ENCODE measurements at regions of chr9 and their contacts with region 1.

Region 1: GRCh38 chr9:91676046-91676445 is 252.4 kb upstream of the NFIL3 start:
- DNase-seq: no peak
- ATAC-seq: peak in 2 of 8 donors; percentile 35 to 52
- H3K4me3 ChIP-seq: no peak overlapping the region
- H3K27ac ChIP-seq: no peak overlapping the region
- H3K4me1 ChIP-seq: no peaks in the 10 kb centered on the region
- H3K27me3 ChIP-seq: peaks cover 0 to 5% (median under 1%) of the 10 kb centered on the region in 7 donors
- CTCF ChIP-seq: peak in 5 of 9 donors; percentile 17 to 44 (median 36)

Region 2: GRCh38 chr9:90393365-90394150 is 1282.5 kb before region 1 on chr9:
- intact Hi-C with region 1: loop called in 1 of 10 experiments (anchors 10 kb)
- DNase-seq: no peak
- ATAC-seq: no peak
- H3K4me3 ChIP-seq: no peak overlapping the region
- H3K27ac ChIP-seq: no peak overlapping the region
- H3K4me1 ChIP-seq: no peaks in the 10 kb centered on the region
- H3K27me3 ChIP-seq: peaks cover 0 to 5% (median 0%) of the 10 kb centered on the region in 7 donors
- CTCF ChIP-seq: no peak

Region 3: DNA sequence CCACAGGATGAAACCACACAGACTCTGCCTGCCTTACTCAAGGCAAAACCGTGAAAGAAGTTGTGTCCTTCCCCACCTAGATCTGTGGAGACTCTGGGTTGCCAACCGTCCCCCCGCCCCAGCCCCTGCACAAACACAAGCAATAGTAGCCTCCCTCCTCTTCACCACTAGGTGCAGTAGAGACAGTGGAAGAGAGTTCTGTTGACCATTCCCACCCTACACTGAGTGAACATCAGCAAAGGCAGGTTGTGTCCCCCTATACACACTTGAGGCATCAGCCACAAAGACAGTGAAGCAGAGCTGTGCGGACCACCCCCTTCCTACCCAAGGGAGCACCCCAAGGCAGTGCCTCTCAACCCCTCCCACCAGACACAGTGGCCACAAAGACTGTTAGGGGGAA is 28.7 kb before region 1 on chr9:
- intact Hi-C with region 1: no loop called
- DNase-seq: no peak
- ATAC-seq: no peak
- H3K4me3 ChIP-seq: no peak overlapping the region
- H3K27ac ChIP-seq: no peak overlapping the region
- H3K4me1 ChIP-seq: peaks cover 0 to 3% (median 0%) of the 10 kb centered on the region in 9 donors
- H3K27me3 ChIP-seq: peaks cover 0 to 7% (median 0%) of the 10 kb centered on the region in 7 donors
- CTCF ChIP-seq: no peak

Region 4: DNA sequence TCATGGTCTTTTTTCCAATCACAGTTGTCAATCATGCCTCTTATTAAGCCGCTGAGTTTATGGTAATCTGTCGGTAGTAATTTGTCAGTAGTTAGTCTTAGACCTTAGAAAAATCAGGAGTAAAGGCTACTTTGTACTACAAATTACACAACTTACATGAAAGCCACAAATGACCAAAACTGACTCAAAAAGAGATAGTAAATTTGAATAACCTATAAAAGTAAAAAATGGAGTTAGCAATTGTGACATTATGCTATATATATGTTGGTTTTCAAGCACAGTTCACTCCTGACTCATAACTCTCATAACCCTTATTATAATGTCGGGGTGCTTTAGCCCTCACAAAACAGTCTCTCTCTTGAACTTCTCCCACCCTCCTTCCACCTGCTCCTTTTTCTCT is 22.2 kb after region 1 on chr9:
- intact Hi-C with region 1: no loop called
- DNase-seq: no peak
- ATAC-seq: no peak
- H3K4me3 ChIP-seq: no peak overlapping the region
- H3K27ac ChIP-seq: no peak overlapping the region
- H3K4me1 ChIP-seq: no peaks in the 10 kb centered on the region
- H3K27me3 ChIP-seq: no peaks in the 10 kb centered on the region
- CTCF ChIP-seq: no peak